ENCODE measurements at regions of chr19 and their contacts with region 1.

Region 1: GRCh38 chr19:17156927-17157302 is 58.2 kb upstream of the USE1 start:
- DNase-seq: no peak
- H3K4me3 ChIP-seq: no peak overlapping the region
- H3K27ac ChIP-seq: no peak overlapping the region
- H3K4me1 ChIP-seq: no peaks in the 10 kb centered on the region
- H3K27me3 ChIP-seq: no peaks in the 10 kb centered on the region
- CTCF ChIP-seq: no peak
- EP300 ChIP-seq: no peak
- POLR2A ChIP-seq: no peak

Region 2: GRCh38 chr19:16714702-16715287 is 442.1 kb before region 1 on chr19:
- in situ Hi-C with region 1: no loop called
- intact Hi-C with region 1: loop called (anchors 5 kb)
- DNase-seq: peak; percentile 72
- H3K4me3 ChIP-seq: no peak overlapping the region
- H3K27ac ChIP-seq: no peak overlapping the region
- H3K4me1 ChIP-seq: peaks cover 0 to 14% (median 9%) of the 10 kb centered on the region in 4 donors
- H3K27me3 ChIP-seq: no peaks in the 10 kb centered on the region
- CTCF ChIP-seq: peak; percentile 79 to 89 (median 85)
- EP300 ChIP-seq: no peak
- POLR2A ChIP-seq: no peak

Region 3: DNA sequence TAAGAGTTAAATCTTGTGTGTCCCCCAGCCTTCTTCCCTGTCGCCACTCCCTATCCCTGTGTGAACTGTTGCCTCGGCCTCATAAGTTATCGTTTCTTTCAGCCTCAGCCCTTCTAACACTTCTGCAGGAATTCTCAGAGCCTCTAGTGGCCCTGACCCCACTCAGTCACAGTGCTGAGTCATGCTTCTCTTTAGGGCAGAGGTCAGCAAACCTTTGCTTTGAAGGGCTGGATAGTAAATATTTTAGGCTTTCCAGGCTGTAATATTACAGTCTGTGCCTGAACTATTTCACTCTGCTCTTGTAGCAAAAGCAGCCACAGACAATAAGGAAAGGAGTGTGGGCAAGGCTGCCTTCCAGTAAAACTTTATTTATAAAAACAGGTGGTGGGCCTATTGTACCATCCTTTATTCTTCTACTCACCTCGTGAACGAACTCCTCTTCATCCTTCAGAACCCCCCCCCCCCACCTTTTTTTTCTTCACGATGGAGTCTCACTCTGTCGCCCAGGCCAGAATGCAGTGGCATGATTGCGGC is 59.3 kb before region 1 on chr19:
- in situ Hi-C with region 1: no loop called
- intact Hi-C with region 1: no loop called
- DNase-seq: no peak
- H3K4me3 ChIP-seq: no peak overlapping the region
- H3K27ac ChIP-seq: peak overlapping the region; percentile 40 to 55 (median 43)
- H3K4me1 ChIP-seq: peaks cover 8 to 25% (median 20%) of the 10 kb centered on the region in 4 donors
- H3K27me3 ChIP-seq: no peaks in the 10 kb centered on the region
- CTCF ChIP-seq: no peak
- EP300 ChIP-seq: no peak
- POLR2A ChIP-seq: no peak